ENCODE measurements at regions of chr9 and their contacts with region 1.

Region 1: GRCh38 chr9:72960446-72960845 is 7.6 kb upstream of the ALDH1A1 start:
- DNase-seq: no peak
- ATAC-seq: no peak
- H3K4me3 Mint-ChIP-seq: no peak overlapping the region
- H3K27ac Mint-ChIP-seq: no peak overlapping the region
- H3K4me1 Mint-ChIP-seq: no peaks in the 10 kb centered on the region
- H3K27me3 Mint-ChIP-seq: peaks cover 3% of the 10 kb centered on the region
- CTCF ChIP-seq: no peak

Region 2: GRCh38 chr9:72599879-72600534 is 360.4 kb before region 1 on chr9:
- CTCF ChIA-PET with region 1: no interaction called
- POLR2A ChIA-PET with region 1: no interaction called
- intact Hi-C with region 1: no loop called
- DNase-seq: no peak
- ATAC-seq: no peak
- H3K4me3 Mint-ChIP-seq: no peak overlapping the region
- H3K27ac Mint-ChIP-seq: no peak overlapping the region
- H3K4me1 Mint-ChIP-seq: no peaks in the 10 kb centered on the region
- H3K27me3 Mint-ChIP-seq: no peaks in the 10 kb centered on the region
- CTCF ChIP-seq: no peak

Region 3: GRCh38 chr9:72971411-72971810 is 11.0 kb after region 1 on chr9:
- CTCF ChIA-PET with region 1: no interaction called
- POLR2A ChIA-PET with region 1: no interaction called
- intact Hi-C with region 1: loop called (anchors 1 kb)
- DNase-seq: no peak
- ATAC-seq: no peak
- H3K4me3 Mint-ChIP-seq: no peak overlapping the region
- H3K27ac Mint-ChIP-seq: no peak overlapping the region
- H3K4me1 Mint-ChIP-seq: peaks cover 4% of the 10 kb centered on the region
- H3K27me3 Mint-ChIP-seq: no peaks in the 10 kb centered on the region
- CTCF ChIP-seq: no peak

Region 4: DNA sequence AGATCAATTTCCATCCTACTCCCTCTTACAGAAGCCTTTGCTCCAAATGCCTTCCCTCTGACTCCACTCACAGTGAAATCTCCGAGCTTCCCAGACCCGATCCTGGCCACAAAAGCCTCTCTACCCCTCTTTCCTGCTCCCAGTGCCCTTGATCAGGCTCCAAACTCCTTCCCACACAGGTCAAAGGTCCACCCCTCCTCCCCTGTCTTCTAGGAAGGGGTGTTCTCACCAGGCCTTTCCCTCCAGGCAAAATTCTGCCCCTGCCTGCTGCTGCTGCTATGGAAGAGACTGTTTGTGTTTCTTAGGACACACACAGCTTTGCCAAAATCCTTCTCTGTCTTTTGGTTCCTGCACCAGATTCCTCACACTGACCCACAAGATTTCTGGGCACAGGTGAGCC is 78.2 kb after region 1 on chr9:
- CTCF ChIA-PET with region 1: no interaction called
- POLR2A ChIA-PET with region 1: no interaction called
- intact Hi-C with region 1: no loop called
- DNase-seq: no peak
- ATAC-seq: no peak
- H3K4me3 Mint-ChIP-seq: no peak overlapping the region
- H3K27ac Mint-ChIP-seq: no peak overlapping the region
- H3K4me1 Mint-ChIP-seq: no peaks in the 10 kb centered on the region
- H3K27me3 Mint-ChIP-seq: peaks cover 2% of the 10 kb centered on the region
- CTCF ChIP-seq: no peak